Activated CD4-positive, alpha-beta T cell treated with anti-CD3 and anti-CD28 coated beads for 36 hours (primary cell): ENCODE measurements at regions of chr6 and their contacts with region 1.

Region 1: GRCh38 chr6:37819177-37819823 is at the start of gene ZFAND3:
- DNase-seq: peak; percentile 97
- ATAC-seq: peak; percentile 80
- H3K4me3 Mint-ChIP-seq: peak within 1 kb of the TSS; percentile 98
- H3K27ac Mint-ChIP-seq: peak within 1 kb of the TSS; percentile 96
- H3K4me1 Mint-ChIP-seq: peaks cover 51% of the 10 kb centered on the region
- H3K27me3 Mint-ChIP-seq: no peaks in the 10 kb centered on the region
- total RNA-seq, gene ZFAND3: 34.5 to 47.8 TPM

Region 2: DNA sequence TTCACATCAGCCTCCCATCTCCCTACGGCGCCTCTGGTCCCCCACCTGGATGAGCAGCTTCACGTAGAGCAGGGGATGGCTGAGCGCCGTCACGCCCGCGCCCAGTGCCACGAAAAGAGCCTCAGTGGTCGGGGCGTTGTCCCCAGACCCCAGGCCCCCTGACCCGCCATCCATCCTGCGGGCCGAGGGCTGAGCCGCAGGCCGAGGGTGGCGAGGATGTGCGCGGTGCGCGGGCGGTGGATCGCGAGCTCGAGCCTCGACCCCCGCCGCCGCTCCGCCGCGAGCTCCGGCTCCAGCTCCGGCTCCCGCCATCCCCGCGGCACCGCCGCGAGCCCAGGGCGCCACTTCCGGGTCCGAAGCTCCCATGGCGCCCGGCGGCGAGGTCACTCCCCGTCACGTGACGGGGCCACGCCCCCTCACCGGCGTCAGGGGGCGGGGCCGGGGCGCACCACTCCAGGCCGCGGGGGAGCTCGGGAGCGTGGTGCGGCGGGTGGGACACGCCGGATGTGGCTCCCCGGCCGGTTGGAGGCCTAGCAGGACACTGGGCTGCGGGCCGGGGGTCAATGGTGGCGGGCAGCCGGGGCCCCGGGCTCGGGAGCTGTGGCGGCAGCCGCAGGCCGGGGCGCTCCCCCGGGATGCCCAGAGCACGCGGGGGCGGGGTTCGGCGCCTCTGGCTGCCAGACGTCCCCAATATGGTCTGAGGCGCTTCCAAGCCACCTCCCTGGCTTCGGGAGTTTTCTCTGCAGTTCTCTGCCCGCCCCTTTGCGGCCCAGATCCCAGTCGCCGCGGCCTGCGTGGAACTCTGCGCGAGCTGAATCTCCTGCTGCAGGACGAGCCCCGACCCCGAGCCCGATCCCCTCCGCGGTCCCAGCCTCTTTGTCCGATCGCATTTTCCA is 833.2 kb before region 1 on chr6 and contains the start of gene MTCH1:
- CTCF ChIA-PET with region 1: no interaction called
- POLR2A ChIA-PET with region 1: no interaction called
- intact Hi-C with region 1: loop called in 1 of 2 experiments (anchors 1 kb)
- DNase-seq: peak; percentile 93
- ATAC-seq: peak; percentile 80
- H3K4me3 Mint-ChIP-seq: no peak within 1 kb of the TSS
- H3K27ac Mint-ChIP-seq: peak within 1 kb of the TSS; percentile 95
- H3K4me1 Mint-ChIP-seq: peaks cover 18% of the 10 kb centered on the region
- H3K27me3 Mint-ChIP-seq: no peaks in the 10 kb centered on the region
- total RNA-seq, gene MTCH1: 72.9 to 92.9 TPM

Region 3: DNA sequence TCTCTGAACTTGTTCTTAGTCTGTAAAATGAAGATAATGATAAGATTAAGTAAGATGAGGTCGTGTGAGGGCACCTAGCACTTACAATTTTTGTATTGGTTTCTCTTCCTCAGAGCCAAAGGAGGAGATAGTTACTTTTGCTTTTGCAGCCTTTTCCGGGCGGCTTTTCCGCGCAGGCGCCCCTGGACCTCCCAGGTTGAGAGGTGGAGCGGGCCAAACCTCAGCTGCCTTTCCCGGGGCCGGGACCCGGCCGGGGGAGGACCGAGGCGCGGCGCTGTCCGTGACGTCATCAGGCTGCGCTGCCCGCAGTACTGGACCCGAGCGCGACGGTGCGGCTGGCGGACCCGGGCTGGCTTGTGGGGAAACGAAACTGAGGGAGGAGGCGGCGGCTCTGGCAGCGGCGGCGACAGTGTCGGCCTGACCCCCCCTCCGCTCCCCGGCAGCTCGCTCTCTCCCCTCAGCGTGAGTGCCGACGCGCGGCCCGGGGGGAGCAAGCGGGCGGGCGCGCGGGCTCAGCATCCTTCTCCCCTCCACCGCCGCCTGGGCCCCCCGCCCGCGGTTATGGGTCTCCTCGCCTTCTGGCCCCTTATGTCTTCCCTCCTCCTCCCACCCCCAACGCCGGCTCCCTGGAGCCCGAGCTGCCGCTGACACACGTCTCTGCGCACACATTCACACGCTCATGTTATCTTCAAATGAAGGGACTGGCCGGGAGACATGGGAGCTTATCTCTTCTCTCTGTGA is 386.2 kb before region 1 on chr6 and contains the start of gene CMTR1:
- CTCF ChIA-PET with region 1: no interaction called
- POLR2A ChIA-PET with region 1: no interaction called
- intact Hi-C with region 1: loop called in 1 of 2 experiments (anchors 1 kb)
- DNase-seq: peak; percentile 98
- ATAC-seq: peak; percentile 88
- H3K4me3 Mint-ChIP-seq: peak within 1 kb of the TSS; percentile 98
- H3K27ac Mint-ChIP-seq: peak within 1 kb of the TSS; percentile 99
- H3K4me1 Mint-ChIP-seq: peaks cover 36% of the 10 kb centered on the region
- H3K27me3 Mint-ChIP-seq: peaks cover 4% of the 10 kb centered on the region
- total RNA-seq, gene CMTR1: 65.3 to 74.6 TPM

Region 4: DNA sequence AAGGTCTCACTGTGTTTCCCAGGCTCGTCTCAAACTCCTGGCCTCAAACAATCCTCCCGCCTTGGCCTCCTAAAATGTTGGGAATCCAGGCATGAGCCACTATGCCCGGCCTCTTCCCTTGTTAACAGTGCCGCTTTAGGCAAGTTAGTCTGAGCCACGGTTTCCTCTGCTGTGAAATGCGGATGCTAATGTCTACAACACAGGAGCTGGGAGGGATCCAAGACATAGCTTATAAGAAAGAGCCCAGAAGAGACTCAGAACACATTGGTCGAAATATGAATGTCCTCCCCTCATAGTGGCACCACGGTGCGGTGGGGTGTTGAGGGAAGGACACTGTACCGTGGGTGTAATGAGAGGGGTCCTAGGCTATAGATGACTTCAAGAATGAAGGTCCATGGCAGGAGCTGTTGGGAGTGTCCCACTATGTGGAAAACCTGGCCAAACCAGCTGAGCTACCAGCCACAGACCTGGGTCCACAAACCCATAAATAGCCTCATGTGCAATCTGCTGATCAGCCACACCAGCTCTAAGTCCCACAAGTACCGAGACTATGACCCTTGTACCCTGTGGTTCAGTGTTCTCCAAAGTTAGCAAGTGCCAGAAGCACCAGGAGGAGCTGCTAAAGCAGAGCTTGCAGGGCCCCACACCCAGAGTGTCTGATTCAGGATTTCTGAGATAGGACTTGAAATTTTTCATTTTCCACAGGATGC is 57.6 kb before region 1 on chr6:
- CTCF ChIA-PET with region 1: no interaction called
- POLR2A ChIA-PET with region 1: no interaction called
- intact Hi-C with region 1: no loop called
- DNase-seq: no peak
- ATAC-seq: no peak
- H3K4me3 Mint-ChIP-seq: no peak overlapping the region
- H3K27ac Mint-ChIP-seq: no peak overlapping the region
- H3K4me1 Mint-ChIP-seq: peaks cover 4% of the 10 kb centered on the region
- H3K27me3 Mint-ChIP-seq: peaks cover 3% of the 10 kb centered on the region

Region 5: GRCh38 chr6:37791156-37791919 is 28.0 kb before region 1 on chr6:
- CTCF ChIA-PET with region 1: interaction called, 3 read pairs
- POLR2A ChIA-PET with region 1: interaction called, 3 read pairs
- intact Hi-C with region 1: loop called (anchors 1 kb)
- DNase-seq: peak; percentile 94
- ATAC-seq: peak; percentile 100
- H3K4me3 Mint-ChIP-seq: no peak overlapping the region
- H3K27ac Mint-ChIP-seq: no peak overlapping the region
- H3K4me1 Mint-ChIP-seq: peaks cover 10% of the 10 kb centered on the region
- H3K27me3 Mint-ChIP-seq: no peaks in the 10 kb centered on the region

Region 6: GRCh38 chr6:37868447-37868825 is 49.1 kb after region 1 on chr6:
- CTCF ChIA-PET with region 1: interaction called, 3 read pairs
- POLR2A ChIA-PET with region 1: interaction called, 4 read pairs
- intact Hi-C with region 1: loop called in 1 of 2 experiments (anchors 1 kb)
- DNase-seq: peak; percentile 32
- ATAC-seq: peak; percentile 66
- H3K4me3 Mint-ChIP-seq: no peak overlapping the region
- H3K27ac Mint-ChIP-seq: peak overlapping the region; percentile 64
- H3K4me1 Mint-ChIP-seq: peaks cover 65% of the 10 kb centered on the region
- H3K27me3 Mint-ChIP-seq: no peaks in the 10 kb centered on the region

Region 7: GRCh38 chr6:38639498-38640215 is 820.4 kb after region 1 on chr6 and contains the start of gene BTBD9:
- CTCF ChIA-PET with region 1: no interaction called
- POLR2A ChIA-PET with region 1: interaction called, 3 read pairs
- intact Hi-C with region 1: loop called in 1 of 2 experiments (anchors 1 kb)
- DNase-seq: peak; percentile 89
- ATAC-seq: peak; percentile 71
- H3K4me3 Mint-ChIP-seq: peak within 1 kb of the TSS; percentile 82
- H3K27ac Mint-ChIP-seq: peak within 1 kb of the TSS; percentile 82
- H3K4me1 Mint-ChIP-seq: peaks cover 40% of the 10 kb centered on the region
- H3K27me3 Mint-ChIP-seq: no peaks in the 10 kb centered on the region
- total RNA-seq, gene BTBD9: 8.2 to 12.2 TPM